ENCODE measurements at regions of chr16 and their contacts with region 1.

Region 1: GRCh38 chr16:4548124-4548523 is 8.0 kb upstream of the C16orf96 start:
- DNase-seq: no peak
- ATAC-seq: no peak
- H3K4me3 ChIP-seq: no peak overlapping the region
- H3K27ac ChIP-seq: no peak overlapping the region
- H3K4me1 ChIP-seq: peaks cover 0 to 6% of the 10 kb centered on the region in 2 donors
- H3K27me3 ChIP-seq: no peaks in the 10 kb centered on the region
- CTCF ChIP-seq: no peak

Region 2: GRCh38 chr16:4506450-4506849 is 41.7 kb before region 1 on chr16:
- intact Hi-C with region 1: loop called in 1 of 2 experiments (anchors 5 kb)
- DNase-seq: peak in 2 of 4 donors; percentile 53 to 79
- ATAC-seq: peak; percentile 86
- H3K4me3 ChIP-seq: no peak overlapping the region
- H3K27ac ChIP-seq: peak overlapping the region in 1 of 2 donors; percentile 79
- H3K4me1 ChIP-seq: peaks cover 3 to 53% of the 10 kb centered on the region in 2 donors
- H3K27me3 ChIP-seq: no peaks in the 10 kb centered on the region
- CTCF ChIP-seq: peak; percentile 77 to 82